ENCODE measurements at regions of chr7 and their contacts with region 1.

Region 1: DNA sequence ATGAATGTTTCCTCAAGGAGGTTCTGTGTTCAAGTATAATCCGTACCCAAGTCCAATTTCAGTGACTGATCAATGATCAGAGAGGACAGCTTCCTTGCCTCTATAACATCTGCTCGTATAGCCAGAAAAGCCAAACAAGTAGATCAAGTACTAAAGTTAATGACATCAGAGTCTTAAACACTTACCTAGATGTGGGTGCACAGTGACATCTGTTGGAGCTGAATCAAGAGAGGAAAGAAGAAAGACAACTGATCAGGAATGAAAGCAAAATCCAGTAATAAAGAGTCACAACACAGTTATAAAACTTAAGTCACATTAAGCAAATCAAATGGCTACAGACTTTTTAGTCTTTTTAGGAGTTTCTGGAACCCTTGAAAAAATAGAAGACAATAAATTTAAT is 236.5 kb downstream of the RELN start:
- DNase-seq: no peak
- H3K4me3 ChIP-seq: no peak overlapping the region
- H3K27me3 ChIP-seq: no peaks in the 10 kb centered on the region
- CTCF ChIP-seq: no peak

Region 2: DNA sequence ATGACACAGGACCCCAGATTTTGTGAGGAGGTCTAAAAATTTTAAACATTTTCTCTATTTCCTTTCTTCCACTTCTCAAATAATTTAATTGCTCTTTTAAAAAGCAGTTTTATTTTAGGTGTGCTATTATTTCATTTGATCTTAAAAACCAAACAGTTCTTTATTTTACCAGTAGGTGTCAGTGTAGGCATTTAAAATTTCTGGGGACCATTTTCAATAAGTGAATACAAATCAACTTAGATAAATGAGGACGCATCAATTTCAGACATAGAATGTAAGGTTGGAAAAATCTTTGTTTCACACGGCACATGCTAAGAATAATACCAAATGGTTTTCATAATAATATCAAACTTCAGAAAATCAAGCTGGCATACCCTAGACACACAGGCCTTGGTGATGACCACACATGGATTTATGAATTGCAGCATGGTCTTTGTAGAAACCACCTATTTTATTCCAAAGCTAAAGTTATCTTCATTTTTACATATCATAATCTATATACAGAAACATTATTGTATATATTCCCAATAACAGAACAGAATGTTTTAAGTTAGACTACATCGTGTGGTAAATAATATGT is 179.4 kb before region 1 on chr7:
- CTCF ChIA-PET with region 1: interaction called, 13 read pairs
- POLR2A ChIA-PET with region 1: no interaction called
- DNase-seq: no peak
- H3K4me3 ChIP-seq: no peak overlapping the region
- H3K27me3 ChIP-seq: no peaks in the 10 kb centered on the region
- CTCF ChIP-seq: peak; percentile 39

Region 3: DNA sequence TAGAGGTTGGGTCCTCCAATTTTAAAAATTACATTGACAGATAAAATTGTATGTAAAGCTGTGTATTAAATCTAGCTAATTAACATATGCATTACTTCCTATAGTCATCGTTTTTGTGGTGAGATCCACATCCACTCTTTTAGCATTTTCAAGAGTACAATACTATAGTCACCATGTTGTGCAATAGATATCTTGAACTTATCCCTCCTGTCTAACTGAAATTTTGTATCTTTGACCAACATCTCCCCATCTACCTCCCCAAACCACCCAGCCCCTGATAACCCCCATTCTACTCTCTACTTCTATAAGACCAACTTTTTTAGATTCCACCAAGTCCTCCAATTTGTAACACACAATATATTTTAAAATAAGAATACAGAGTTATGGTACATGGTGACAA is 28.4 kb after region 1 on chr7:
- CTCF ChIA-PET with region 1: no interaction called
- POLR2A ChIA-PET with region 1: no interaction called
- DNase-seq: no peak
- H3K4me3 ChIP-seq: no peak overlapping the region
- H3K27me3 ChIP-seq: no peaks in the 10 kb centered on the region
- CTCF ChIP-seq: no peak

Region 4: GRCh38 chr7:104179178-104179577 is 426.2 kb after region 1 on chr7:
- CTCF ChIA-PET with region 1: no interaction called
- POLR2A ChIA-PET with region 1: no interaction called
- DNase-seq: no peak
- H3K4me3 ChIP-seq: no peak overlapping the region
- H3K27me3 ChIP-seq: no peaks in the 10 kb centered on the region
- CTCF ChIP-seq: no peak

Measured in BJ (cell line).